ENCODE measurements at regions of chr7 and their contacts with region 1.

Region 1: DNA sequence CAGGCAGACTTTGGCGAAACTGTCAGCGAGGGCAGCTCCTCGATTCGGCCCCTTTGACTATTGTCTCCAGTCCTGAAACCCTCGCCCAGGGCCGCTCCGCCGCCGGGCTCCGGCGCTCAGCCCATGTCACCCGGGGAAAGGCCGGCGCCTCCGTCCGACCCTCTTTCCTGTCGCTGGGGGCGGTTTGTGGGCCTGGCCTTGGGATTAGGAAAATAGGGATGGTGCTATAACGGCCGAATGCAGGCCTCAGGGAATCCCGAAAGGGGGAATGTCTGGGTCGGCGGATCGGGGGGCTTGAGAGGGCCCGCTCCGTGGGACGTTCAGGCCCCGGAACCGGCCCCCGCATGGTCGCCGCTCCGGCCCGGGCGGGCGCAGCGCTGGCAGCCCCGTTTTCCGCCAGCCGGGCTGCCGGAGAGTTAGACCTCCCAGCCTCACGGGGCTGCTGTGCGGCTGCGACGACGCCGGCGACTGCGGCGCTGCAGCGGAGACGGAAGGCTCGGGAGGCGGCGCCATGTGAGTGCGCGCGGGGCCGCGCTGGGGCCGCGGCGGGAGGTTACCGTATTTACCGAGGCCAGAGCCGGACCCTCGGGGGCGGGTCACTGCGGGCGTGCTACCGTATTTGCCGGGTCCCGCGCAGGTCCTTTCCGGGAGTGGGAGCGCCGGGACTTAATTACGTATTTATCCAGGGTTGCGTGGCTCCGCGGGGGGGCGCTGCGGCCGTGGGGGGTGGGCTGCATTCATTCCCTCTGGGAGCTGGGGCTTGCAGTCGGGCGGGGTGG is 25.9 kb downstream of the ZNF775 start:
- DNase-seq: peak; percentile 59
- H3K4me3 Mint-ChIP-seq: peak overlapping the region; percentile 74
- H3K27ac Mint-ChIP-seq: peak overlapping the region; percentile 23
- H3K4me1 Mint-ChIP-seq: peaks cover 24% of the 10 kb centered on the region
- H3K27me3 Mint-ChIP-seq: no peaks in the 10 kb centered on the region
- CTCF ChIP-seq: no peak

Region 2: GRCh38 chr7:150356265-150356897 is 48.6 kb before region 1 on chr7:
- CTCF ChIA-PET with region 1: interaction called, 10 read pairs
- POLR2A ChIA-PET with region 1: no interaction called
- intact Hi-C with region 1: no loop called
- DNase-seq: peak; percentile 41
- H3K4me3 Mint-ChIP-seq: no peak overlapping the region
- H3K27ac Mint-ChIP-seq: no peak overlapping the region
- H3K4me1 Mint-ChIP-seq: no peaks in the 10 kb centered on the region
- H3K27me3 Mint-ChIP-seq: no peaks in the 10 kb centered on the region
- CTCF ChIP-seq: peak; percentile 67

Region 3: DNA sequence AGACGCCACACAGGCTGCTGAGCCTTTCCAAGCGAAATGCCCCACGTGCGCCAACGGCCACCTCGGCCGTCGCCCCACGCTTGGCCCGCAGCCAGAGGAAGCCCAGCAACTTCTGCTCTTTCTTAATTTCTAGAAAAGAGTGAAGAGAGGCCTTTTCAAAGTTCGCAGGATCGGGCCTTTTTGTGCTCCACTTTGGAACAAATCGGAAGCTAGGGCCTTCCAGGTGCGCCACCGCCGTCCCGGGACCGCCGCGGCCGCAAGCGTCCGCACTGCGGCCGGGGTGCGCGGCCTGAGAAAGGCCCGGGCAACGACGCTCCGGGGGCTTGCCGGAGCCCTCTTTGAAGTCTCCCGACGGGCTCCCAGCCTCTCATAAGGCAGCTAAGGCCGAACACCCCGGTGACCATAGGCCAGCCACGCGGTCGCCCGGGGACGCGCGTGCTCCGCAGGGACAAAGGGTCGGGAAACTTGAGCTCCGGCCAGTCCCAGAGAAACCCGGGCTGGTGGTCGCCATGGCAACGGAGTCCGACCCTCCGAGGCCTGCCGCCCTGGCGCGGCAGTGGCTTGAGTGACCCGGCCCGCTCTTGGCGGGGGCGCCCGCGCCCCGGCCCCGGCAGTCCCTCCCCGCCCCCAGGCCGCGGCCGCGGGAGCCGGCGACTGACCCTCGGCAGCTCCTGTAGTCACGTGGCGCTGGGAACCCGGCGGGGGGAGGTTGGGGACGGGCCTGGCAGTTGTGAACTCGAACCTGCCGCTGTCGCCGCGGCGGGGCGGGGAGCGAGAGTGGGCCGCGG is 36.7 kb before region 1 on chr7 and contains the start of gene REPIN1:
- CTCF ChIA-PET with region 1: interaction called, 5 read pairs
- POLR2A ChIA-PET with region 1: interaction called, 6 read pairs
- intact Hi-C with region 1: loop called (anchors 1 kb)
- DNase-seq: peak; percentile 84
- H3K4me3 Mint-ChIP-seq: peak within 1 kb of the TSS; percentile 90
- H3K27ac Mint-ChIP-seq: peak within 1 kb of the TSS; percentile 89
- H3K4me1 Mint-ChIP-seq: no peaks in the 10 kb centered on the region
- H3K27me3 Mint-ChIP-seq: no peaks in the 10 kb centered on the region
- CTCF ChIP-seq: no peak
- total RNA-seq, gene REPIN1: 80.8 and 83.0 TPM in 2 replicates

Region 4: DNA sequence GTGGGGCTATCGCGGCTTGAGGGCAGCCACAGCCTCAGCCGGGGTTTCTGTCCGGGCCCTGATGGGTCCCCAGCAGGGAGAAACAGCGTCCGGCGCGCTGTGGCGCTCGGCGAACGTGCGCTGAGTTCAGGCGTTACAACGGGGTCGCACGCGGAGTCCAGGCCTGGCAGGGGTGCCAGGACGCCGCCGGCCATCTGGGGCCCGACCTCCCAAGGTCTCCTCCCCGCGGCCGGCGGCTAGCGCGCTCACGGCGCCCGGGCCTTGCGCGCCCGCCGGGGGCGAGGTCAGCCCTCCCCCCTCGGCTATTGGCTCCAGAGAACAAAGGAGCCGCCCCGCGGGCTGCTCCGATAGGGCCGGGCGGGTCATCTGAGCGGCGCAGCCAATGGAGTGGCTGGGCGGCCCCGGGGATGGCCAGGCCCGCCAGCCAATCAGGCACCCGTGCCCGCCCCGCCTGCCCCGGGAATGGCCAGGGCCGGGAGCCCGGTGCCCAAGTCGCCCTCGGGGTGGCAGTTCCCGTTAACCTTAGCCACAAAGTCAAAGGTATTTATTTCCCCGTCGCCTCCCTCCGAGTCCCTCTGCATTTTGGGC is 26.0 kb before region 1 on chr7 and contains the start of gene ZNF775:
- CTCF ChIA-PET with region 1: interaction called, 5 read pairs
- POLR2A ChIA-PET with region 1: interaction called, 9 read pairs
- intact Hi-C with region 1: loop called (anchors 1 kb)
- DNase-seq: peak; percentile 94
- H3K4me3 Mint-ChIP-seq: peak within 1 kb of the TSS; percentile 82
- H3K27ac Mint-ChIP-seq: peak within 1 kb of the TSS; percentile 62
- H3K4me1 Mint-ChIP-seq: peaks cover 27% of the 10 kb centered on the region
- H3K27me3 Mint-ChIP-seq: no peaks in the 10 kb centered on the region
- CTCF ChIP-seq: no peak
- total RNA-seq, gene ZNF775: 1.7 and 2.0 TPM in 2 replicates

Region 5: GRCh38 chr7:150393325-150393724 is 11.7 kb before region 1 on chr7:
- CTCF ChIA-PET with region 1: no interaction called
- POLR2A ChIA-PET with region 1: no interaction called
- intact Hi-C with region 1: no loop called
- DNase-seq: no peak
- H3K4me3 Mint-ChIP-seq: no peak overlapping the region
- H3K27ac Mint-ChIP-seq: no peak overlapping the region
- H3K4me1 Mint-ChIP-seq: no peaks in the 10 kb centered on the region
- H3K27me3 Mint-ChIP-seq: no peaks in the 10 kb centered on the region
- CTCF ChIP-seq: no peak

Region 6: DNA sequence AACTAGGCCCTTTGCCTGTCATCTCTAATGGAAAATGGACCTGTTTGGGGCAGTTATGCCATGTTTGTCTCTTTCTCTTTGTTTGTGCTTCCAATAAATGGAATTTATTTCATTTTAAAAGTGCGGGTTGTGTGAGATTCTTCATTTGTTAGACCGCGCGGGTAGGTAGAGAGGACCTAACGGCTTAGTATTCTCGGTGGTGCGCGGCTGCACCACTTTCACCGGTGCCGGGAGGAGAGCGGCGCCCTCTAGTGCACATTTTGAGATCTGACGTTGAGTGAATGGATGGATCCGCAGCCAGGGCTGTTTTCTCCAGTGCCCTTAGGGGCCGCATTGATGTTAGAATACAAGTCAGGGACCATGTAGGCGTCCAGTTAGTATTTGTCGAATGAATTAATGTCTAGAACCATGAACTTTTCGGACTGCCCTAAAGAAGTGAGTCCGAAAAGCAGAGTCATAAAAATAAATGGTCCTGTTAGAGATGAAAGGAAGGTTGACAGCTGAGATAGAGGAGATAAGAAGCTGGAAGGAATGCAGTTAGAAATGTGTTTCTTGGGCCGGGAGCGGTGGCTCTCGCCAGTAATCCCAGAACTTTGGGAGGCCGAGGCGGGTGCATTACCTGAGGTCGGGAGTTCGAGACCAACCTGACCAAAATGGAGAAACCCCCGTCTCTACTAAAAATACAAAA is 16.1 kb after region 1 on chr7:
- CTCF ChIA-PET with region 1: interaction called, 11 read pairs
- POLR2A ChIA-PET with region 1: no interaction called
- intact Hi-C with region 1: no loop called
- DNase-seq: peak; percentile 83
- H3K4me3 Mint-ChIP-seq: no peak overlapping the region
- H3K27ac Mint-ChIP-seq: no peak overlapping the region
- H3K4me1 Mint-ChIP-seq: peaks cover 7% of the 10 kb centered on the region
- H3K27me3 Mint-ChIP-seq: no peaks in the 10 kb centered on the region
- CTCF ChIP-seq: peak; percentile 91

Measured in MCF 10A (cell line).